SK-N-SH (cell line): ENCODE measurements at regions of chr3 and their contacts with region 1.

Region 1: DNA sequence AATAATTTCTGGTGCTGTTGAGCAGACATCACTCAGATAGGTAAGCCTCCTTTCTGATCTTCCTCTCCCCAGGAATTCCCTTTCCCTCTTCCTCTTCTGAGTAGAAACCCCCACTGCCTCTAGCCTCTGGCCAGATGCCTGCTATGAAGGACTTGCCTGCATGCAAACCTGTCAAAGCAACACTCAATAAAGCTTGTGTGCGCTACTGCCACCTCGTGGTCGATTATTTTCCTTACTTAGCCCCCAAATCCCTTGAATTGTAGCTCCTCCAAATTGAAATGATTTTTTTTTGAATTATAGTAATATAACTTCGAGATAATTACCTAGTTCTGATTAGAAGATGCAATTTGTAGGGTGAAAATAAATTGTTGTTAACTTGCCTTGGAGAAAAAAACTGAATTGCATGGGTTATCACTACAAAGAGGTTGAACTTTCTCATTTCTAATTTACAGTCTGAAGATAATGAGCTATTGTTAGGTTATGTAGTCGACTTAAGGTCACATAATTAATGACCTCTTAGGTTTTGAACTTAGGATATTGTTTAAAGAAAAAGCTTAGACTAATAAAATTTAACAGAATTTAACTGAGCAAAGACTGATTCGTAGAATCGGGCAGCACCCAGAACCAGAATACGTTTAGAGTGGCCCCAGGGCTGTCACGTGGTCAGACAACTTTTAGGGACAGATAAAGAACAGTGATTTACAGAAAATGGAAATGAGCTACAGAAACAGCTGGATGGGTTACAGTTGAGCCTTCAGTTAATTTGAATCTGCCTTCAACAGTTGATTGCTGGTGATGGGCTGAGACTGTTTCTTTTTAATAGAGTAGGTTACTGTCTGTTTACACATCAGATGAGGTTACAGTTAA is 269.3 kb downstream of the ARPP21 start:
- DNase-seq: peak; percentile 23
- H3K4me3 ChIP-seq: no peak overlapping the region; a peak in 1 of 4 replicates
- H3K27ac ChIP-seq: no peak overlapping the region; a peak in 1 of 4 replicates
- H3K4me1 ChIP-seq: no peaks in the 10 kb centered on the region; a peak in 1 of 4 replicates
- H3K27me3 ChIP-seq: no peaks in the 10 kb centered on the region
- CTCF ChIP-seq: peak; percentile 91
- EP300 ChIP-seq: 0 out of 4 replicates have a peak, but pooled peaks of 1 of the 2 experiments have one; percentile 6
- RAD21 ChIP-seq: peak; percentile 88

Region 2: GRCh38 chr3:34683851-34684250 is 1224.7 kb before region 1 on chr3:
- CTCF ChIA-PET with region 1: interaction called, 12 read pairs
- POLR2A ChIA-PET with region 1: no interaction called
- DNase-seq: peak; percentile 4
- H3K4me3 ChIP-seq: no peak overlapping the region
- H3K27ac ChIP-seq: no peak overlapping the region; a peak in 1 of 4 replicates
- H3K4me1 ChIP-seq: no peaks in the 10 kb centered on the region
- H3K27me3 ChIP-seq: no peaks in the 10 kb centered on the region
- CTCF ChIP-seq: peak; percentile 30
- EP300 ChIP-seq: no peak
- RAD21 ChIP-seq: peak; percentile 79

Region 3: GRCh38 chr3:35921706-35922105 is 13.1 kb after region 1 on chr3:
- CTCF ChIA-PET with region 1: interaction called, 15 read pairs
- POLR2A ChIA-PET with region 1: no interaction called
- DNase-seq: no peak
- H3K4me3 ChIP-seq: no peak overlapping the region
- H3K27ac ChIP-seq: no peak overlapping the region
- H3K4me1 ChIP-seq: peaks cover 0 to 3% of the 10 kb centered on the region in 2 experiments; a peak in 1 of 4 replicates
- H3K27me3 ChIP-seq: no peaks in the 10 kb centered on the region
- CTCF ChIP-seq: no peak
- EP300 ChIP-seq: no peak
- RAD21 ChIP-seq: no peak

Region 4: GRCh38 chr3:35929158-35929557 is 20.6 kb after region 1 on chr3:
- CTCF ChIA-PET with region 1: interaction called, 15 read pairs
- POLR2A ChIA-PET with region 1: no interaction called
- DNase-seq: no peak
- H3K4me3 ChIP-seq: no peak overlapping the region
- H3K27ac ChIP-seq: peak overlapping the region in 1 of 2 experiments; percentile 79; a peak in 2 of 4 replicates
- H3K4me1 ChIP-seq: peaks cover 7 to 41% of the 10 kb centered on the region in 2 experiments
- H3K27me3 ChIP-seq: no peaks in the 10 kb centered on the region
- CTCF ChIP-seq: no peak
- EP300 ChIP-seq: peak in 1 of 2 experiments; percentile 98; a peak in 2 of 4 replicates
- RAD21 ChIP-seq: no peak